ENCODE measurements at regions of chr1 and their contacts with region 1.

Region 1: GRCh38 chr1:26431979-26432695 is at the start of gene DHDDS:
- DNase-seq: peak; percentile 98 to 99
- ATAC-seq: peak; percentile 96 to 98 (median 97)
- H3K4me3 ChIP-seq: peak within 1 kb of the TSS; percentile 66
- H3K4me3 Mint-ChIP-seq: peak within 1 kb of the TSS; percentile 97
- H3K27ac ChIP-seq: peak within 1 kb of the TSS; percentile 48
- H3K27ac Mint-ChIP-seq: peak within 1 kb of the TSS; percentile 89 to 93
- H3K4me1 ChIP-seq: peaks cover 21% of the 10 kb centered on the region
- H3K4me1 Mint-ChIP-seq: peaks cover 13 to 22% of the 10 kb centered on the region in 2 donors
- H3K27me3 ChIP-seq: no peaks in the 10 kb centered on the region
- H3K27me3 Mint-ChIP-seq: no peaks in the 10 kb centered on the region
- CTCF ChIP-seq: no peak
- total RNA-seq, gene DHDDS: 39.6 to 48.6 (median 43.4) TPM

Region 2: DNA sequence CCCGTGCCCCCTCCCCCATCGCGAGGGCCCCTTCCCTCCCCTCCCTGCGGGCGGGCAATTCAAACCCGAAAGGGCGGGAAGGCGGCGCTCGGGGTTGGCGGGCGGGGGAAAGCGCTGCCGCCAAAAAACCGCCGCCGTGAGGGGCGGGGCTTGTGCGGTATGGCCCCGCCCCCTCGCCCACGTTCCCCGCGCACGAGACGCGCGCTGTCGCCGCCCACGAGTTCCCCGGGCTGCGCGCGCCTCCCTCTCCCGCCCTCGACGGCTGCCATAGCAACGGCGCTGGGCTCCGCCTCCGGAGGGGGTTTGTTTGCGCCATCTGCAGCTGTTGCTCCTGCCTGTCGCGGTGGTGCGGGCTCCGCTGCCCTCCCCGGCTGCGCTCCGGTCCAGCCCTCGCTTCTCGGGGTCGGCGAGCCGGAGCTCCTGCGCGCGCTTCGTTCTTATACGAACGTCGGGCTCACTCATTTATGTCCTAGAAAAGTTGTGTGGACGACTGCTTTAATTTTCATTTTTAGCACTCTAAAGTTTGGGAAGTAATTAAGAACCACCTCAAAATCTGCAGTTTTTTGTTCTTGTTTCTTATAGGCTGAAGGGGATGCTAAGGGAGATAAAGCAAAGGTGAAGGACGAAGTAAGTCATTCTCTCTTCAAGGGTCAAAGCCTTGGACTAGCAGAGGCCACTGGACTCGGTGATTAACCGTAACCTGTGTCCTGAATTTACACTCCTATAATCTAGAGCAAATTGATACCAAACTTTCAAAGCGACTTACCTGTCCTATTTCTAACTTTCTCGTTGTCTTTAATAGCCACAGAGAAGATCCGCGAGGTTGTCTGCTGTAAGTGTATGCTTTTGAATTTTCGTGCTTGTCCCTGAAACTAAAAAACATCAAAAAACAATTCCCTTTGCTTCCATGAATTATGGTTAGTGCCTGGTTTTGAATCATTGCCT is 41.0 kb after region 1 on chr1:
- intact Hi-C with region 1: loop called (anchors 5 kb)
- DNase-seq: peak; percentile 94 to 98
- ATAC-seq: peak; percentile 86 to 96 (median 87)
- H3K4me3 ChIP-seq: peak overlapping the region; percentile 60
- H3K4me3 Mint-ChIP-seq: peak overlapping the region; percentile 89
- H3K27ac ChIP-seq: peak overlapping the region; percentile 83
- H3K27ac Mint-ChIP-seq: peak overlapping the region; percentile 90 to 91
- H3K4me1 ChIP-seq: peaks cover 28% of the 10 kb centered on the region
- H3K4me1 Mint-ChIP-seq: peaks cover 37 to 45% of the 10 kb centered on the region in 2 donors
- H3K27me3 ChIP-seq: no peaks in the 10 kb centered on the region
- H3K27me3 Mint-ChIP-seq: no peaks in the 10 kb centered on the region
- CTCF ChIP-seq: no peak

Region 3: DNA sequence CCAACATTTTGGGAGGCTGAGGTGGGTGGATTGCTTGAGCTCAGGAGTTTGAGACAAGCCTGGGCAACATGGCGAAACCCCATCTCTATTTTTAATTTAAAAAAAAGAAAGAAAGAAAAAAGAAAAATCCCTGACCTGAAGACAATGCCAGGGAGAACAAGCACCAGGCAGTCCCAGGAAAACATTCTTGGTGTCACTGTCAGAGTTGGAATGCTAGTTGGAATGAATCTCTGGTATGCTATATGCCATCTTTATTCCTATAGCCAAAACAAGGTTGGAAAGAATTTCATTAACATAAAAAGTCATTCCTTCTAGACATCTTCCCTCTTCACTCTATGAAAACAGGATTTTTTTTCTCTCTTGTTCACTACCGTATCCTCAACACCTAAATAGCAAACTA is 1797.9 kb after region 1 on chr1:
- intact Hi-C with region 1: no loop called
- DNase-seq: no peak
- ATAC-seq: no peak
- H3K4me3 ChIP-seq: no peak overlapping the region
- H3K4me3 Mint-ChIP-seq: no peak overlapping the region
- H3K27ac ChIP-seq: no peak overlapping the region
- H3K27ac Mint-ChIP-seq: peak overlapping the region; percentile 30 to 36
- H3K4me1 ChIP-seq: peaks cover 24% of the 10 kb centered on the region
- H3K4me1 Mint-ChIP-seq: peaks cover 12 to 27% of the 10 kb centered on the region in 2 donors
- H3K27me3 ChIP-seq: no peaks in the 10 kb centered on the region
- H3K27me3 Mint-ChIP-seq: no peaks in the 10 kb centered on the region
- CTCF ChIP-seq: no peak